ENCODE measurements at regions of chr5 and their contacts with region 1.

Region 1: DNA sequence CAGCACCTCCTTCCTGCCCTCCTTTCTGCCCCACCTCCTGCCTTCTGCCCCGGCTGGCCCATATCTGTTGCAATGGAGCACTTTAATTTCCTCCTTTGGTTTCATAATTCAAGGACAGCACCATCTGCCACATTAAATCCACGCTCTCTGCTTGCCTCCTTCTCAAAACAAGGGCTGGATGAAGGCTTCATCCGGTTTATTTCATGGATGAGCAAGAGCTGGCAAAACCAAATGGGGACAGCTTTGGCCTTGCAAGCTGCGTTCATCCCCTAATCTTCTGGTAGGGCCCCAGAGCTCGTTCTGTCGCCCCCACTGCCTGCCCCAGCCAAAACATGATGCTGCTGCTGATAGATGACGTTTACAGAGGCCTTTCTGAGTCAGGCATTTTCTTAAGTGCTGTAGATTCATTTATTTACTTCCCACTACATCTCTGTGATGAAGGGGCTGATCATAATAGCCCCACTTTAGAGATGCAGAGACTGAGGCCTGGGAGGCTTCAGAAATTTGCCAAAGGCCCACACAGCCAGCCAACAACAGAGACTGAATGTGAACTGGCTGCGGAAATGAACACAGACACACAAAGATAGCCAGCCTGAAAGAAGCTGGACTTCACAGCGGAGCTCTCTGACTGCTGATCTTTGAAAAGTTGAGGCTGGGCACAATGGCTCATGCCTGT is 115.6 kb upstream of the CPEB4 start:
- DNase-seq: no peak

Region 2: GRCh38 chr5:173625696-173626504 is 146.6 kb before region 1 on chr5:
- intact Hi-C with region 1: loop called (anchors 5 kb)
- DNase-seq: no peak